CD14-positive monocyte (primary cell): ENCODE measurements at regions of chr17 and their contacts with region 1.

Region 1: DNA sequence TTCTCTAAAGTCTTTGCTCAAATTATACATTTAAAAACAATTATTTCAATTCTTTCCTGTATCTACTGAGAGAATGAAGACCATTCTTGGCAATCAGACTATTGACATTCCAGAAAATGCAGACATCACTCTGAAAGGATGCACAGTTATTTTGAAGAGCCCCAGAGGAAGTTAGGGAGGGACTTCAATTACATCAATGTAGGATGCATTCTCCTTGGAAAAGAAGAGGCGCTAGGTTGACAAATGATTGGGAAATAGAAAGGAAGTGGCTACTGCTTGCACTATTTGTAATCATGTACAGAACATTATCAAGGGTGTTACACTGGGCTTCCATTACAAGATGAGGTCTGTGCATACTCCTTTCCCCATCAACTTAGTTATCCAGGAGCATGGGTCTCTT is 74.3 kb downstream of the SSH2 start:
- DNase-seq: peak in 1 of 3 donors; percentile 28
- H3K4me3 ChIP-seq: no peak overlapping the region
- H3K4me3 Mint-ChIP-seq: no peak overlapping the region
- H3K27ac ChIP-seq: peak overlapping the region in 1 of 2 donors; percentile 44
- H3K27ac Mint-ChIP-seq: peak overlapping the region in 2 of 7 donors; percentile 10 to 31
- H3K4me1 ChIP-seq: peaks cover 39% of the 10 kb centered on the region in 2 donors
- H3K4me1 Mint-ChIP-seq: peaks cover 53% of the 10 kb centered on the region
- H3K27me3 ChIP-seq: no peaks in the 10 kb centered on the region
- H3K27me3 Mint-ChIP-seq: peaks cover 0 to 4% (median 0%) of the 10 kb centered on the region in 3 donors
- CTCF ChIP-seq: no peak

Region 2: DNA sequence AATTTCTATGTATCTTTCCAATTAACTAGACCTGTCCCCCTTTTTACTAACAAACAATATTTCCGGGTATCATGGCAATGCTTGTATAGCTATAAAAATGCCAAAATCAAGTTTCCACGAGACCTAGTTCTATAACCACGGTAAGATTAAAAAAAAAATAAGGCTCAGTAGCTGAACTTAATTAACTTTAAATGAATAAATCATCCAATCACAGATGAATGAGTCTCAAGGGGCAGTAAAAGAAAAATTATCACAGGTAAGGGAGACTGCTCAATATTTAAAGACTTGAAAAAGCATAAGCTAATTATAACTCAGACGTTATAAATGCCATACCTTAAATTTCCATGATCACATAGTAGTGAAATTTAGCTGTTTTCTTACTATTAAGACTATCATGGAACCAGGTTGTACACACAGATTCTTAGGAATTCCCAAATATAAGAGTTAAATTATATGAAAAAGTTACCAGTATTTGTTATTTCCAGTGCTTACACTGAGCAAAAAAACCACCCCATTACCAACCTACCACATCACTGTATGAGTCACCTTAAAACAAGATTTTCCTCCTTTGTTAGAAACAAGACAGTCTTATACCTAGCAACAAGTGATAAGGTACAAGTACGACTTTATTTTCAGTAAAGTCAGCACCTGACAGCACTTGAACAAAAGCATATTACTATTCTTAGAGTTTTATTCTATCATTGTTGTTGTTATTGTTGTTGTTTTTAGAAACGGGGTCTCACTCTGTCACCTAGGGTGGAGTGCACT is 53.7 kb after region 1 on chr17:
- intact Hi-C with region 1: no loop called
- DNase-seq: no peak
- H3K4me3 ChIP-seq: no peak overlapping the region
- H3K4me3 Mint-ChIP-seq: no peak overlapping the region
- H3K27ac ChIP-seq: no peak overlapping the region
- H3K27ac Mint-ChIP-seq: no peak overlapping the region
- H3K4me1 ChIP-seq: no peaks in the 10 kb centered on the region
- H3K4me1 Mint-ChIP-seq: peaks cover 4% of the 10 kb centered on the region
- H3K27me3 ChIP-seq: no peaks in the 10 kb centered on the region
- H3K27me3 Mint-ChIP-seq: no peaks in the 10 kb centered on the region
- CTCF ChIP-seq: no peak

Region 3: DNA sequence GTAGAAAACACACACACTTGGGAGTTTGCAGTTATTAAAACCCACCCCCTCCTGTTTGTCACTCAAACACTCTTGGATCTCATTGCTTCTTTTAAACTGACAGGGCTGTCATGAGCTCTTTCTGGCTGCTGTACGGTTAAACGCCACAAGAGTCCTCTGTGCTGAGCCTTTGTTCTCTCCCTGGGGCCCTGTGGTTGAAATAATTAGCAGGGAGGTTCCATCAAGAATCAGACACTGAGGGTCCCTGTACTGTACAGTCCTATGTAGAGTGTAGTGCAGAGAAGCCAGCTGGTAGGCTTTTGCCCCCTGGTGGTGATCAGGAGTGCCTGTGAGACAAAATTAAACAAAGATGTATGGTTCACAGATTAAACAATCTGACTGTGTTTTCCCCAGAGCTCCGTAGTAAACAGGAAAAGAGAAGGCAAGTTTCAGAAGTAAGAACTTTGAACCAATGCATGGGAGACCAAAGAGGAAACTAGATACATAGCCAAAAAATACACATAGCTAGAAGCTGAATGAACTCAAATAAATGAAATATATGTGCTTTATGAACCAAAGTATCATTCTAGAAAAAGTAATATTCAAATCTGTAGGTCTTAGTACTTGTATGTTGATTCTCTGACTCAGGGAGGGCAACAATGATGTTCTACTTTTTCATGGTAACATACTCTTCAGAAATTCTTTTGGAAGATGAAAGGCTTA is 75.7 kb after region 1 on chr17:
- intact Hi-C with region 1: loop called in 1 of 2 experiments (anchors 10 kb)
- DNase-seq: peak; percentile 52 to 84 (median 75)
- H3K4me3 ChIP-seq: peak overlapping the region; percentile 72 to 92 (median 91)
- H3K4me3 Mint-ChIP-seq: no peak overlapping the region
- H3K27ac ChIP-seq: no peak overlapping the region
- H3K27ac Mint-ChIP-seq: no peak overlapping the region
- H3K4me1 ChIP-seq: peaks cover 23 to 32% of the 10 kb centered on the region in 2 donors
- H3K4me1 Mint-ChIP-seq: peaks cover 25% of the 10 kb centered on the region
- H3K27me3 ChIP-seq: no peaks in the 10 kb centered on the region
- H3K27me3 Mint-ChIP-seq: peaks cover 0 to 5% (median 0%) of the 10 kb centered on the region in 3 donors
- CTCF ChIP-seq: peak; percentile 94

Region 4: GRCh38 chr17:30148376-30148775 is 292.7 kb after region 1 on chr17:
- intact Hi-C with region 1: no loop called
- DNase-seq: no peak
- H3K4me3 ChIP-seq: no peak overlapping the region
- H3K4me3 Mint-ChIP-seq: no peak overlapping the region
- H3K27ac ChIP-seq: no peak overlapping the region
- H3K27ac Mint-ChIP-seq: peak overlapping the region in 1 of 7 donors; percentile 9
- H3K4me1 ChIP-seq: no peaks in the 10 kb centered on the region
- H3K4me1 Mint-ChIP-seq: no peaks in the 10 kb centered on the region
- H3K27me3 ChIP-seq: no peaks in the 10 kb centered on the region
- H3K27me3 Mint-ChIP-seq: peaks cover 0 to 1% (median 0%) of the 10 kb centered on the region in 3 donors
- CTCF ChIP-seq: no peak